Mammary epithelial cell (primary cell): ENCODE measurements at regions of chr10 and their contacts with region 1.

Region 1: GRCh38 chr10:126857178-126857806 is 47.9 kb upstream of the DOCK1 start:
- DNase-seq: no peak
- H3K4me3 ChIP-seq: no peak overlapping the region
- H3K27ac ChIP-seq: no peak overlapping the region
- H3K4me1 ChIP-seq: no peaks in the 10 kb centered on the region
- H3K27me3 ChIP-seq: no peaks in the 10 kb centered on the region
- CTCF ChIP-seq: peak in 1 of 2 donors; percentile 22

Region 2: DNA sequence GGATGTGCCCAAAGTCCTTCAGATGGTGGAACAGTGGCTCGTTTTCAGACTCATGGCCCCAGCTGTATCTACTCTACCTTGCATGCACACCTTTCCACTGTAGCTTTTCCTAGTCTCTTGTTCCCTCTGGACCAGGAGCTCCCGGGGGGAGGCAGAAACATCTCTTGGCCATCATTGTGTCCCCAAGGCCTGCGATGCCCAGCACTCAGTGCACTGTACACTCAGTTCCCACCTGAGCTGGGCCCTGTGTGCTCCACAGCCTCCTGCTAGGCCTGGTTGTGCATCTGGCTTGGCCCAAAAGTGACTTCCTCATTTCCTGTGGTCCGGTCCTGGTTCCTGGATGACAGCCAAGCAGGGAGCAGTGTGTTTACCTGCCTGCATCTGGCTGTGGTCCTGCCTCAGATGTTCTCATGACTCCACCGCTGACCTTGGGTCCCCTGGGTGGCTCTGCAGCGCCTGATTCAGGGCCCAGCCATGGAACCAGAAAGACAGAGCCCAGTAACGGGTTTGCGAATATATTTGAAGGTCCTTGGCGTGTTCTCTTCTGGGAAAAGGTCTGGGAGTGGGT is 38.0 kb after region 1 on chr10:
- CTCF ChIA-PET with region 1: no interaction called
- dilution Hi-C with region 1: no loop called
- in situ Hi-C with region 1: no loop called
- intact Hi-C with region 1: loop called (anchors 2 kb)
- DNase-seq: no peak
- H3K4me3 ChIP-seq: no peak overlapping the region
- H3K27ac ChIP-seq: no peak overlapping the region
- H3K4me1 ChIP-seq: no peaks in the 10 kb centered on the region
- H3K27me3 ChIP-seq: no peaks in the 10 kb centered on the region
- CTCF ChIP-seq: no peak